Psoas muscle (tissue), 8 donors: ENCODE measurements at regions of chr12 and their contacts with region 1.

Region 1: DNA sequence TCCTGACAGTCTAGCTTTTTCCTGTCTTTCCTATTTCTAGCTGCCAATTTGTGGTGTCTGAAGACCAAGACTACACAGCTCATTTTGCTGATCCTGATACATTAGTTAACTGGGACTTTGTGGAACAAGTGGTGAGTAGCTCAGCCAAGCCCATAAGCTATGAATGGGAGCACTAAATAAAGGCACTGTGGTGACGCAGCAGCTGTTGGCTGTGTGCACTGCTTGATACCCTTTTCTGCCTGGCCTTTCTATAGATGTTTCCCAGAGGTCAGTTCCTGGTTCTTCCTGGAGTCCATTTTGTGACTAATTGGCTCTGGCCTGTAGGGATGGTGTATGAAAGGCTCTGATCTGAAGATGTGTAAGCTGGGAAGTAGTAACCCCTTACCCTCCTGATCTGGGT is 20.5 kb downstream of the RNF10 start:
- DNase-seq: peak in 1 of 2 donors; percentile 70
- ATAC-seq: peak; percentile 82 to 94 (median 90)
- H3K4me3 ChIP-seq: peak overlapping the region; percentile 1
- H3K27ac ChIP-seq: peak overlapping the region; percentile 81
- H3K4me1 ChIP-seq: peaks cover 47% of the 10 kb centered on the region
- H3K27me3 ChIP-seq: no peaks in the 10 kb centered on the region
- CTCF ChIP-seq: no peak

Region 2: DNA sequence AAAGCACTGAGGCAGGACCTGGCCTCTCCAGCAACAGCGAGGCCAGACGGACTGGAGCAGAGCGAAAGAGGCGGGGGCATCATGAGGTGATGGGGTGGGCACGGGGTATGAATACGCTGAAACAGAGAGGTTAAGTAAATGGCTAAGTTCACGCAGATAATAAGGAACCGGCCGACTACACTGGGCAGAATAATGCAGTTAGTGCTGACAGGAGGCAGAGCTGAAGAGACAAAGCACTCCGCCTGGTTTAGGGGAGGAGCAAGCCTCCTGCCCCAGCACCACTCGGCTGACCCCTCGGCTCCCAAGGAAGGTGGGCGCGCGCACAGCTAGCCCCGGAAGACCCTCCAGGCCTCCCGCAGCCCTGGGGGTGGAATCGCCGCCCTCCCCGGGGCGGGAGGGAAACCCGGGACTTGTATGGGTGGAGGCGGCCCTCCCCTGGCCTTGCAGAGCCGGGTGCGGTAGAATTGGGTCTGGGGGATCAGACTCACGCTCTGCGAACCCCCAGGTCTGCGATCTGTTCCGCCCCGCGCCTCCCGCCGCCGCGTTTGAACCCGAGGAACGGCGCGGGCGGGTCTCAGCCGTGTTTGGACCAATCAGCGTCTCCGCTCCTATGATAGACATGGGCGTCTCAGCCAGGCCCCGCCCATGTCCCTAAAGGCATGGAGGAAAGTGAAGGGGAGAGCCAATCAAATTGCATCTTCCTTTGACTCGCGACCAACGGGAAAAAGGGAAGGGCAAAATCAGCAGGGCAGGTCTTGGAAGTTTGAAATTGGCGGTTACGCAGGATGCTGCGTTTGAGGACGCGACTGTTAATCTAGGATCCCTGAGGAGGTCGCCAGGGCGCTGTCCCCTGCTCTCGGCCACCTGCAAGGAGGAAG is 677.7 kb before region 1 on chr12 and contains the start of gene CIT:
- intact Hi-C with region 1: no loop called
- DNase-seq: peak; percentile 81 to 89
- ATAC-seq: peak; percentile 98 to 100 (median 99)
- H3K4me3 ChIP-seq: peak within 1 kb of the TSS; percentile 75
- H3K27ac ChIP-seq: no peak within 1 kb of the TSS
- H3K4me1 ChIP-seq: no peaks in the 10 kb centered on the region
- H3K27me3 ChIP-seq: no peaks in the 10 kb centered on the region
- CTCF ChIP-seq: no peak
- total RNA-seq, gene CIT: 0.26 to 2.4 (median 0.90) TPM

Region 3: DNA sequence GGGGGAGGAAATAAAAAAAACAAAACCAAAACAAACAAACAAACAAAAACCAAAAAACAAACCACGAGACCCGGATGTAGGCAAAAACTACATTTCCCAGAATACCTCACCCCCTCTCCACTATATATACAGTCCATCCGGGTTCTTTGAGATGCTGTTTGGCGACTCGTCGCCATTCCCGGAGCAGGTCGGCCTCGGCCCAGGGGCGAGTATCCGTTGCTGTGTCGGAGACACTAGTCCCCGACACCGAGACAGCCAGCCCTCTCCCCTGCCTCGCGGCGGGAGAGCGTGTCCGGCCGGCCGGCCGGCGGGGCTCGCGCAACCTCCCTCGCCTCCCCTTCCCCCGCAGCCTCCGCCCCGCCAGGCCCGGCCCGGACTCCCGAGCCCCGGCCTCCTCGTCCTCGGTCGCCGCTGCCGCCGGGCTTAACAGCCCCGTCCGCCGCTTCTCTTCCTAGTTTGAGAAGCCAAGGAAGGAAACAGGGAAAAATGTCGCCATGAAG is 20.4 kb before region 1 on chr12 and contains the start of gene RNF10:
- intact Hi-C with region 1: loop called in 1 of 2 experiments (anchors 2 kb)
- DNase-seq: peak; percentile 61 to 87
- ATAC-seq: peak; percentile 69 to 72 (median 71)
- H3K4me3 ChIP-seq: peak within 1 kb of the TSS; percentile 96
- H3K27ac ChIP-seq: peak within 1 kb of the TSS; percentile 98
- H3K4me1 ChIP-seq: peaks cover 25% of the 10 kb centered on the region
- H3K27me3 ChIP-seq: no peaks in the 10 kb centered on the region
- CTCF ChIP-seq: no peak
- total RNA-seq, gene RNF10: 296 to 463 (median 350) TPM

Region 4: GRCh38 chr12:120686690-120687577 is 132.3 kb after region 1 on chr12 and contains the start of gene MLEC:
- intact Hi-C with region 1: no loop called
- DNase-seq: peak; percentile 99
- ATAC-seq: peak; percentile 91 to 92 (median 92)
- H3K4me3 ChIP-seq: peak within 1 kb of the TSS; percentile 96
- H3K27ac ChIP-seq: peak within 1 kb of the TSS; percentile 95
- H3K4me1 ChIP-seq: peaks cover 37% of the 10 kb centered on the region
- H3K27me3 ChIP-seq: no peaks in the 10 kb centered on the region
- CTCF ChIP-seq: no peak
- total RNA-seq, gene MLEC: 49.2 to 63.8 (median 60.9) TPM